GM23248 (cell line): ENCODE measurements at regions of chr6 and their contacts with region 1.

Region 1: DNA sequence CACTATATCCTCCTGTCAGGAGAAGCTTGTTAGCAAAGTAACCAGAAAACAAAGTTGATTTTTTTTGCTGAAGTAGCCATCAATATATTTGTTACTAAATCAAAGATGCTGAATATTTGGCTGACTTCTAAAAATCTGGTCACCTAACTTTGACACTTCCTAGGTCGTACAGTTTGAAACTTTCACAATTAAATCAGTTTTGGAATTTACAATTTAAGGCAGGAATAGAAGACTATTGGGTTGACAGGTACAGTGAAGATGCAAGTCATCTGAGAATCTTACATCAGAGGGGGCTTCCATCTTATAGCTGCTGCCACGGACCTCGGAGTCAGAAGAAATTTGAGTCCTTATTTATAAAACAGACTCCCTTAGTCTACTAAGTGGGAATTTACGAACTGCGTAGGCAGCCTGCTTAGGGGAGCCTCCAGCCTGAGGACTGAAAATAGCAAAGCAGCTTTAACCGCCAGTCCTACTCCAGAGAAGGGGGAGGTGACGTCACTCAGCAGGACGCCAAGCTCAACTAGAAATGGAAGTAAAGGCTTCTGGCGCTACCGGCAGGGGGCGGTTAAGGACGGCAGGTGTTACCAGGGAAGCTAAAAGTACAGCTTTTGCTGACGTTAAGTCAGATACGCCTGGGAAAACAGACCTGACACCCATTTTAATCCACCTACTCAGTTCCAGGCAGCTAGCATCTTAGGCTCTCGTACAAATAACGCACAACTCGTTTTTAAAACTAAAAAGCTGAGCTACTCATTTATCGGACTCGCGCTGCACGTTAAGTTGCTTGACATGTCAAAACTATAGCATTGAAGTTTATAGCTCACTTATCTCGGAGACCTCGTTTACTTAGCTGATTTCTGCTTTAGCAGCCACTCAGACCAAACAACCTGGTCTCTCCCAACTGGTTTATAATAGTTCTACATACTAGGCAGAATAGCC is 61.1 kb upstream of the HFE start:
- DNase-seq: peak; percentile 97
- H3K4me3 ChIP-seq: peak overlapping the region; percentile 81
- H3K27ac ChIP-seq: peak overlapping the region; percentile 85
- H3K4me1 ChIP-seq: peaks cover 22% of the 10 kb centered on the region
- H3K27me3 ChIP-seq: no peaks in the 10 kb centered on the region

Region 2: DNA sequence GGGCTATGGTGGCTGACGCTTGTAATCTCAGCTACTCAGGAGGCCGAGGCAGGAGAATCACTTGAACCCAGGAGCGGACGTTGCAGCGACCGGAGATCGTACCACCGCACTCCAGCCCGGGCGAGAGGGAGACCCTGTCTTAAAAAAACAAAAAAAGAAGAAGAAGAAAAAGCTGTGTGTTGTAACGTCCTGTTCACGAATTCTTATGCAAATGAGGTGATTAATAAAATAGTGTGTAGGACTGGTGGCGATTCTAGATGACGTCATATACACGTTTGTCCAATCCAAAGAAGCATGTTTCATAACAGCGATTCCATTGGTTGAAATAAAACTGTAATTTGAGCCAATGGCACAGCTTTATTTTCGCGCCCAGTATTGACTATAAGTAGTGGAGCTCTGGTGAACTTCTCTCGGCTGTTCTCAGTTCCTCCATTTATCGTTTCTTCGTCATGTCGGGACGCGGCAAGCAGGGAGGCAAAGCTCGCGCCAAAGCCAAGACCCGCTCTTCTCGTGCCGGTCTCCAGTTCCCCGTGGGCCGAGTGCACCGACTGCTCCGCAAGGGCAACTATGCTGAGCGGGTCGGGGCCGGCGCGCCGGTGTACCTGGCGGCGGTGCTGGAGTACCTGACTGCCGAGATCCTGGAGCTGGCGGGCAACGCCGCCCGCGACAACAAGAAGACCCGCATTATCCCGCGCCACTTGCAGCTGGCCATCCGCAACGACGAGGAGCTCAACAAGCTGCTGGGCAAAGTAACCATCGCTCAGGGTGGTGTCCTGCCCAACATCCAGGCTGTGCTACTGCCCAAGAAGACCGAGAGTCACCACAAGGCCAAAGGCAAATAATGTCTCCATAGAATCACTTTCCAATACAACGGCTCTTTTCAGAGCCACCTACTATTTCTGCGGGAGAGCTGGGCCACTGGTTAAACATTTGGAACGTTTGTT is 1839.0 kb after region 1 on chr6:
- in situ Hi-C with region 1: loop called (anchors 25 kb)
- DNase-seq: peak; percentile 97
- H3K4me3 ChIP-seq: peak overlapping the region; percentile 85
- H3K27ac ChIP-seq: peak overlapping the region; percentile 86
- H3K4me1 ChIP-seq: peaks cover 7% of the 10 kb centered on the region; the same call in 1 of the 2 replicates
- H3K27me3 ChIP-seq: no peaks in the 10 kb centered on the region